CD14-positive monocyte (primary cell): ENCODE measurements at regions of chr22 and their contacts with region 1.

Region 1: DNA sequence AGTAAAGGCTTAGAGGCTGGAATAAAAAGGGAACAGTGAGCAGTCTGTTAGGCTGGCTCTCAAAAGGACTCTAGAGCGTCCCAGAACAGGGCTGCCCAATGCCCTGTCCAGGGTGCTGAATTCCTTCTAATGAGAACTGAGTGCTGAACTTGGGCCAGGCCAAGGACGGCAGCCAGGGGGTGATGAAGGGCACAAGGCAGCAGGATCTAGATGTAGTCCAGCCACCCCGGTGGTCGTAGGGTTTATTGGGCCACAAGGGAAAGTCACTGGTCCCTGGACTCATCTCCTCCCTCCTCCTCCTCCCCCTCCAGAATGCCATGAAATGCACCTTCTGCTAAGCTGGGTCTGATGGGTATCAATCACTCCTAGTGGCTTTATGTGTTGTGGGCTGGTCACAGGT is 19.2 kb downstream of the NPTXR start:
- DNase-seq: peak; percentile 15 to 31 (median 15)
- H3K4me3 ChIP-seq: no peak overlapping the region
- H3K4me3 Mint-ChIP-seq: no peak overlapping the region
- H3K27ac ChIP-seq: no peak overlapping the region
- H3K27ac Mint-ChIP-seq: no peak overlapping the region
- H3K4me1 ChIP-seq: no peaks in the 10 kb centered on the region
- H3K4me1 Mint-ChIP-seq: no peaks in the 10 kb centered on the region
- H3K27me3 ChIP-seq: no peaks in the 10 kb centered on the region
- H3K27me3 Mint-ChIP-seq: peaks cover 0 to 8% (median 0%) of the 10 kb centered on the region in 3 donors
- CTCF ChIP-seq: peak; percentile 28

Region 2: GRCh38 chr22:39917776-39918495 is 1093.4 kb after region 1 on chr22:
- intact Hi-C with region 1: loop called in 1 of 2 experiments (anchors 10 kb)
- DNase-seq: no peak
- H3K4me3 ChIP-seq: no peak overlapping the region
- H3K4me3 Mint-ChIP-seq: no peak overlapping the region
- H3K27ac ChIP-seq: no peak overlapping the region
- H3K27ac Mint-ChIP-seq: no peak overlapping the region
- H3K4me1 ChIP-seq: peaks cover 0 to 3% of the 10 kb centered on the region in 2 donors
- H3K4me1 Mint-ChIP-seq: peaks cover 18% of the 10 kb centered on the region
- H3K27me3 ChIP-seq: no peaks in the 10 kb centered on the region
- H3K27me3 Mint-ChIP-seq: peaks cover 0 to 3% (median 2%) of the 10 kb centered on the region in 3 donors
- CTCF ChIP-seq: no peak